Activated CD4-positive, alpha-beta memory T cell treated with anti-CD3 and anti-CD28 coated beads for 36 hours (primary cell): ENCODE measurements at regions of chr2 and their contacts with region 1.

Region 1: DNA sequence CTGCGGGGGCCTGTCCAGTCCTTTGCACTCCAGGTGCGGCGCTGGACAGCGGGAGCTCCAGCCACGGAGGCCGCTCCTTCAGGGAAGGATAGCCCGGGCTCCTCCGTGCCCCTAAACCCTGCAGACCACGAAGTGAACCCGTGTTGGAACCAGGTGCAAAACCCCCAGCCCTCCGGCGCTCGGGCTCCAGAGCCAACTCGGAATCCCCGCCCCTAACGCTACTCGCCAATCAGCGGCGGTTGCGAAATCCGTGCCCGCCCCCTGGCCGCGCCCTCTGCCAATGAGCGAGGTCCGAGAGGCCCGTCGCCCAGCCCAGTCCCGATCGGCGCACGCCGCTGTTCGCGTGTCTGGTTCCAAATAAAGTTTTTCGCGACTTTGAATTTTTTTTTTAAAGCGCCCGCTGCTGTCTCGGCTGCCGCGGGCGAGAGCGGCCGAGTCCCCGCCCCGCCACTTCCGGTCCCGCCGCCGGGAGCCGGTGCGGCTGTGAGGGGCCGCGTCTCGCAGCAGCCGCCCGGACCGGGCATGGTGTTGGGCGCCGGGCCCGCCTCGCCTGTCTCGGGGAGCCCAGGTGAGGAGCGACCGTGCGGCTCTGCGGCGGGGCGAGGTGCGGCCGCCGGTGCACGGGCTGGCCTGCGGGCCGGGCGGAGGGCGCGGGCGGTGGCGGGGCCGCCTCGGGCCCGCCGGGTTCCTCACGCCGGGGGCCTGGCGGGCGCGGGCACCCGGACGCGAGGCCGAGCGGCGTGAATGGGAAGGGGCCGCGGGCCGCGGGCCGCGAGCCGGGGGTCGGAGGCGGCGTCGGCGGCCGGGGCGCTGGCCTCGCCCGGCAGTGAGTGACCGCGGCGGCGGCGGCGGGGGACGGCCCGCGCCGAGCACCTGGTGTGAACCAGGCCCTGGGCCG is at the start of gene UBE2F:
- DNase-seq: peak; percentile 98
- H3K4me3 Mint-ChIP-seq: peak within 1 kb of the TSS; percentile 86
- H3K27ac Mint-ChIP-seq: peak within 1 kb of the TSS; percentile 77
- H3K4me1 Mint-ChIP-seq: peaks cover 40% of the 10 kb centered on the region
- H3K27me3 Mint-ChIP-seq: no peaks in the 10 kb centered on the region
- total RNA-seq, gene UBE2F: 50.7 to 52.9 TPM

Region 2: GRCh38 chr2:237341872-237342271 is 624.9 kb before region 1 on chr2:
- CTCF ChIA-PET with region 1: no interaction called
- POLR2A ChIA-PET with region 1: no interaction called
- intact Hi-C with region 1: no loop called
- DNase-seq: no peak
- H3K4me3 Mint-ChIP-seq: no peak overlapping the region
- H3K27ac Mint-ChIP-seq: no peak overlapping the region
- H3K4me1 Mint-ChIP-seq: no peaks in the 10 kb centered on the region
- H3K27me3 Mint-ChIP-seq: no peaks in the 10 kb centered on the region

Region 3: DNA sequence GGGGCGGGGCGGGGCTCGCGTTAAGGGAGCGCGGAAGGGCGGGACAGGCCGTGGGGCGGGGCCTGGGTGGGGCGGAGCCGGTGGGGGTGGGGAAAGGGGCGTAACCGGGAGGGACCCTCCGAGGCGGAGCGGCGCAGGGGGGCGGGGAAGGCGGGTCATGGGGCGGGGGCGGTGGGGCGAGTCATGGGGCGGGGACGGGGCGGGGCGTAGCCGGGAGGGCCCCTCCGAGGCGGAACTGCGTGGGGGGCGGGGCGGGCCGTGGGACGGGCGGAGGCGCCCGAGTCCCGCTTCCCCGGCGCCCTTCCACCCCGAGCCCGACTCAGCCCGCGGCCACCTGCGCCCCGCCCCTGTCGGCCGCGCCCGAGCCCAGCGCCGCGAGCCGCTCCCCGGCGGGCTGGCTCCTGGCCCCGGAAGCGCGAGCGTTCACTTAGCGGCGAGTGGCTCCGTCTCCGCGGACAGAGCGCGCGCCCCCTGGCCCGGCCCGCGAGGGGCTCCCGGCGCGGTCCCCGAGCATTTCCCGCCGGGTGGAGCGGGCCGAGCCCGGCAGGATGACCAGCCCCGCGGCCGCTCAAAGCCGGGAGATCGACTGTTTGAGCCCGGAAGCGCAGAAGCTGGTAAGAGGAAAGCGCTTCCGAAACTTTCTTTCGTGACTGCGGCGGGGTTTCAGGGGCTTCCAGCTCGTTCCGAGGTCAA is 274.8 kb before region 1 on chr2:
- CTCF ChIA-PET with region 1: no interaction called
- POLR2A ChIA-PET with region 1: no interaction called
- intact Hi-C with region 1: loop called (anchors 1 kb)
- DNase-seq: peak; percentile 96
- H3K4me3 Mint-ChIP-seq: peak overlapping the region; percentile 98
- H3K27ac Mint-ChIP-seq: peak overlapping the region; percentile 99
- H3K4me1 Mint-ChIP-seq: peaks cover 62% of the 10 kb centered on the region
- H3K27me3 Mint-ChIP-seq: no peaks in the 10 kb centered on the region

Region 4: GRCh38 chr2:237923481-237924163 is 43.2 kb before region 1 on chr2:
- CTCF ChIA-PET with region 1: interaction called, 4 read pairs
- POLR2A ChIA-PET with region 1: no interaction called
- intact Hi-C with region 1: loop called (anchors 5 kb)
- DNase-seq: peak; percentile 85
- H3K4me3 Mint-ChIP-seq: peak overlapping the region; percentile 48
- H3K27ac Mint-ChIP-seq: no peak overlapping the region
- H3K4me1 Mint-ChIP-seq: peaks cover 33% of the 10 kb centered on the region
- H3K27me3 Mint-ChIP-seq: no peaks in the 10 kb centered on the region

Region 5: GRCh38 chr2:238024986-238025385 is 58.2 kb after region 1 on chr2:
- CTCF ChIA-PET with region 1: no interaction called
- POLR2A ChIA-PET with region 1: no interaction called
- intact Hi-C with region 1: loop called (anchors 2 kb)
- DNase-seq: peak; percentile 72
- H3K4me3 Mint-ChIP-seq: no peak overlapping the region
- H3K27ac Mint-ChIP-seq: peak overlapping the region; percentile 5
- H3K4me1 Mint-ChIP-seq: peaks cover 11% of the 10 kb centered on the region
- H3K27me3 Mint-ChIP-seq: no peaks in the 10 kb centered on the region

Region 6: GRCh38 chr2:238136820-238137537 is 170.2 kb after region 1 on chr2:
- CTCF ChIA-PET with region 1: no interaction called
- POLR2A ChIA-PET with region 1: no interaction called
- intact Hi-C with region 1: no loop called
- DNase-seq: no peak
- H3K4me3 Mint-ChIP-seq: no peak overlapping the region
- H3K27ac Mint-ChIP-seq: no peak overlapping the region
- H3K4me1 Mint-ChIP-seq: peaks cover 5% of the 10 kb centered on the region
- H3K27me3 Mint-ChIP-seq: no peaks in the 10 kb centered on the region

Region 7: GRCh38 chr2:238239872-238240751 is 273.3 kb after region 1 on chr2 and contains the start of gene HES6:
- CTCF ChIA-PET with region 1: no interaction called
- POLR2A ChIA-PET with region 1: no interaction called
- intact Hi-C with region 1: loop called (anchors 10 kb)
- DNase-seq: peak; percentile 83
- H3K4me3 Mint-ChIP-seq: peak within 1 kb of the TSS; percentile 81
- H3K27ac Mint-ChIP-seq: no peak within 1 kb of the TSS
- H3K4me1 Mint-ChIP-seq: peaks cover 3% of the 10 kb centered on the region
- H3K27me3 Mint-ChIP-seq: peaks cover 17% of the 10 kb centered on the region
- total RNA-seq, gene HES6: 3.1 to 3.3 TPM

Region 8: GRCh38 chr2:238426568-238427434 is 460.0 kb after region 1 on chr2 and contains the start of gene ASB1:
- CTCF ChIA-PET with region 1: no interaction called
- POLR2A ChIA-PET with region 1: no interaction called
- intact Hi-C with region 1: loop called (anchors 5 kb)
- DNase-seq: peak; percentile 86
- H3K4me3 Mint-ChIP-seq: peak within 1 kb of the TSS; percentile 90
- H3K27ac Mint-ChIP-seq: peak within 1 kb of the TSS; percentile 92
- H3K4me1 Mint-ChIP-seq: peaks cover 38% of the 10 kb centered on the region
- H3K27me3 Mint-ChIP-seq: no peaks in the 10 kb centered on the region
- total RNA-seq, gene ASB1: 34.6 to 38.8 TPM